Endothelial cell of umbilical vein (primary cell): ENCODE measurements at regions of chr14 and their contacts with region 1.

Region 1: GRCh38 chr14:69005432-69006147 is 26.5 kb upstream of the ACTN1 start:
- DNase-seq: peak; percentile 99
- H3K4me3 ChIP-seq: no peak overlapping the region
- H3K27ac ChIP-seq: peak overlapping the region; percentile 51
- H3K4me1 ChIP-seq: peaks cover 15% of the 10 kb centered on the region
- H3K27me3 ChIP-seq: no peaks in the 10 kb centered on the region
- CTCF ChIP-seq: no peak
- POLR2A ChIP-seq: no peak

Region 2: GRCh38 chr14:68795597-68796417 is 209.8 kb before region 1 on chr14:
- CTCF ChIA-PET with region 1: no interaction called
- POLR2A ChIA-PET with region 1: no interaction called
- dilution Hi-C with region 1: no loop called
- intact Hi-C with region 1: no loop called
- DNase-seq: peak; percentile 75
- H3K4me3 ChIP-seq: peak overlapping the region; percentile 59 to 72 (median 72)
- H3K27ac ChIP-seq: peak overlapping the region; percentile 98
- H3K4me1 ChIP-seq: peaks cover 14% of the 10 kb centered on the region
- H3K27me3 ChIP-seq: no peaks in the 10 kb centered on the region
- CTCF ChIP-seq: peak; percentile 42 to 68
- POLR2A ChIP-seq: peak; percentile 1

Region 3: DNA sequence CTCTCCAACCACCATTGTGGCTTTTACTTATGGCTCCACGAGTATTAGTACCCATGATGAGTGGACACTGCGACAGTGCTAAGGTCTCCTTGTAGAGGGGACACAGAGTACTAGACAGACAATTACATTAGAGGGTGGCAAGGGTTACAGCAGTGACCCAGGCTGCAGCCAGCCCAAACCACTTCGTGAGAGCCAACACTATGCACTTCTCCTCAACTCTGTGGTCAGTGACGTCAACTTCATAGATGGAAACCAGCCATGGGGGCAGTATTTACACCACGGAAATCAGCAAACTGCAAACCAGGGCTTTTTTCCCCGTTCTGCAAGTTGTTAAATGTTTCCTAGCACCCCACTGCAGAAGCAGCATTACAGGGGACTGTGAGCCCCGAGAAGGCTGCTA is 151.2 kb before region 1 on chr14:
- CTCF ChIA-PET with region 1: no interaction called
- POLR2A ChIA-PET with region 1: no interaction called
- dilution Hi-C with region 1: no loop called
- intact Hi-C with region 1: no loop called
- DNase-seq: no peak
- H3K4me3 ChIP-seq: no peak overlapping the region
- H3K27ac ChIP-seq: no peak overlapping the region
- H3K4me1 ChIP-seq: no peaks in the 10 kb centered on the region
- H3K27me3 ChIP-seq: no peaks in the 10 kb centered on the region
- CTCF ChIP-seq: no peak
- POLR2A ChIP-seq: no peak

Region 4: DNA sequence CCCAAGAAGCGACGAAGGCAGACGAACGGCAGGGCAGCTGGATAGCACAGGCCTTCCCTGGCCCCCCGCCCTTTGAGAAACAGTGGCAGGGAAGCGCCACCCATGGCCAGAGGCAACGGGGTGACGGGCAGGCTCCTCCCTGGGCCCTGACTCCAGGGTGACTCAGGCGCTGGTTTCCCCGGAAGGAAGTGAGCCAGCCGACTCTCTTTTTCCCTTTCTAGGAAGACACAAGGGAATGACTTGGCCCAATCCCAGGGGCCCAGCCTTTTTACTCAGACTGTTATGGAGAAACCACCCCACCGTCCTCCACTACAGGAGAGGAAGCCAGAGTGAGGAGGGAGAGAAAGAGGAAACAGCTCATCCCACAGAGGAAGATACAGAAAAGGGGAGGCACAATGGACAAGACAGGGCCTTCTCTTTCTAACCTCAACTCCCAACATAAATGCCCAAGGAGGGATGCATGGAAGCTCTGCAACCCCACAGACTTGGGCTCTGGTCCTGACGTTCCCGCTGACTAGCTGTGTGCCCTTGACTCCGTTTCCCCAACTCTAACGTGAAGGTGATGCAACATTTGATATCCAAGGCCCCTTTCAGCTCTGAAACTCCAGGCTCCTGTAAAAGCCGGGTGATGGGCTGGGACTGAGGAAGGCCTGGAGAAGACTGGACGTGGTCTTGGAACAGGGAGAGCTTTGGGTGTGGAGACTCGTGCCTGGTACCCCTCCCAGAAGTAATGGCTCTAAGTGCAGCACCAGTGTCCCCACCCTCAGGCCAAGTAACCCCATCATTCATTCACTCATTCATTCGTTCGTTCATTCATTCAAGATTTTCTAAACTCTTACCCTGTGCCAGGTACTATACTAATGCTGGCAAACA is 54.3 kb before region 1 on chr14:
- CTCF ChIA-PET with region 1: no interaction called
- POLR2A ChIA-PET with region 1: no interaction called
- dilution Hi-C with region 1: no loop called
- intact Hi-C with region 1: no loop called
- DNase-seq: peak; percentile 74
- H3K4me3 ChIP-seq: no peak overlapping the region
- H3K27ac ChIP-seq: peak overlapping the region; percentile 77
- H3K4me1 ChIP-seq: peaks cover 78% of the 10 kb centered on the region
- H3K27me3 ChIP-seq: no peaks in the 10 kb centered on the region
- CTCF ChIP-seq: no peak
- POLR2A ChIP-seq: no peak

Region 5: GRCh38 chr14:69043596-69044260 is 38.1 kb after region 1 on chr14:
- CTCF ChIA-PET with region 1: interaction called, 3 read pairs
- POLR2A ChIA-PET with region 1: no interaction called
- dilution Hi-C with region 1: no loop called
- intact Hi-C with region 1: loop called (anchors 2 kb)
- DNase-seq: peak; percentile 56
- H3K4me3 ChIP-seq: no peak overlapping the region
- H3K27ac ChIP-seq: peak overlapping the region; percentile 39
- H3K4me1 ChIP-seq: peaks cover 60% of the 10 kb centered on the region
- H3K27me3 ChIP-seq: no peaks in the 10 kb centered on the region
- CTCF ChIP-seq: no peak
- POLR2A ChIP-seq: no peak

Region 6: GRCh38 chr14:69079183-69079742 is 73.7 kb after region 1 on chr14:
- CTCF ChIA-PET with region 1: no interaction called
- POLR2A ChIA-PET with region 1: no interaction called
- dilution Hi-C with region 1: no loop called
- intact Hi-C with region 1: loop called (anchors 2 kb)
- DNase-seq: peak; percentile 94
- H3K4me3 ChIP-seq: peak overlapping the region in 1 of 3 experiments; percentile 33
- H3K27ac ChIP-seq: peak overlapping the region; percentile 100
- H3K4me1 ChIP-seq: peaks cover 47% of the 10 kb centered on the region
- H3K27me3 ChIP-seq: no peaks in the 10 kb centered on the region
- CTCF ChIP-seq: no peak
- POLR2A ChIP-seq: no peak